Cardiac septum (tissue), 1 donor: ENCODE measurements at regions of chr19 and their contacts with region 1.

Region 1: GRCh38 chr19:32971715-32972540 is at the starts of genes CEP89 and FAAP24:
- DNase-seq: peak; percentile 99
- total RNA-seq, gene CEP89: 9.7 TPM
- total RNA-seq, gene FAAP24: 0.32 TPM

Region 2: DNA sequence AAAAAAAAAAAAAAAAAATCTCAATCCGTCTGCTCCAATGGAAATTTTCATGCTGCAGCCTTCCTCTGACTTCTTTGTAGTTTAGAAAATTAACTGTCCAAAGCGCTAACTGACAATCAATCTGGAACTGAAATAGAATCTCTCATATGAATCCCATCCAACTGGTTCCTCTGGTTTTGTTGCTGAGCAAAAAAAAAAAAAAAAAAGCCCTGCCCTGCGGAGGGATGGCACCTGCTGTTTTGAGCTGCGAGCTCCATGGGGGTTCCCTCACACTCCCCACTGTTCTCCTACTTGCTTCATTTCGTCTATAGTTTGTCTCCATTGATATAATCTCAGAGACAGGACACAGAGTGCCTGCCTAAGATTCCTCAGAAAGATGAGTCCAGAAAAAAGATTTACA is 33.5 kb after region 1 on chr19:
- intact Hi-C with region 1: no loop called
- DNase-seq: no peak

Region 3: DNA sequence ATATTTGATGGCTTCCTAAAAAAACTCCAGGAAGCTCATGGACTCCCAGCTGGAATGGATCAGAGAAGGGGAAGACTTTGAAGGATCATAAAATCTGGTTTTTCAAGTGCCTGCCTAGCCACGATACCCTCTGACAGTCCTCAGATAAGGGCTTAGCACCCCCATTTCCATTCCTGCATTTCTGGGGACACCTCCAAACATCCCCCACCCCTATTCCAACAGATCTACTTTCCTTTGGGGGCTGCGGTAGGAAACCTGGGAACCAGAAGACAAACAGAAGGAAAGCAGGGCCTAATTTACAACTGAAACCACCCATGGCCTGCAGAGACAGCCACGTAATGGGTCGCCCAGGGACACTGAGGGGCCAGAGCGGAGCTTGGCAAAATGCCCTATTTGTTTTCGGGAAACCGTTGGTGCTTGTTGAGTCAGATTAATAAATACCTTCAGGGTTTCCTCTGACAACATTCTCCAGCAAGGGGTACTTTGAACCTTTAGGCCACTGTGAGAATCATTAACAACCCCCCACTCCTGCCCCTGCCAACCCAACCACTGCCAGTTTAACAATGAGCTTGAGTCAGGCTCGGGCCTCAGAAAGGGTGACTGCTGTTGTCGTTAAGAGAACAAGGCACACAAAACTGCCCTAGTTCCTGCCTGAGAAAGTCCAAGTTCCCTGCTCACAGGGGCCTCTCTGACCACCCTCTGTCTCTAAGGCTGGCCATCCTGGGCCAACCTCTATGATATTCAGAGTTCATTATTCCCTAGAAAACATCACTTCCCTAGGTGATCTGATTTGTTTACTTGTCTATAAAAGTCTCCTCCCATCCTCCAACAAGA is 69.3 kb after region 1 on chr19:
- intact Hi-C with region 1: no loop called
- DNase-seq: no peak

Region 4: GRCh38 chr19:33080761-33081681 is 109.1 kb after region 1 on chr19 and contains the start of gene GPATCH1:
- intact Hi-C with region 1: loop called (anchors 10 kb)
- DNase-seq: peak; percentile 95
- total RNA-seq, gene GPATCH1: 5.2 TPM

Region 5: GRCh38 chr19:33125929-33126388 is 154.0 kb after region 1 on chr19:
- intact Hi-C with region 1: loop called (anchors 10 kb)
- DNase-seq: no peak

Region 6: GRCh38 chr19:33157906-33158305 is 186.0 kb after region 1 on chr19:
- intact Hi-C with region 1: no loop called
- DNase-seq: no peak

Region 7: GRCh38 chr19:33176670-33177416 is 204.9 kb after region 1 on chr19:
- intact Hi-C with region 1: loop called (anchors 10 kb)
- DNase-seq: peak; percentile 98